Activated CD4-positive, alpha-beta T cell treated with anti-CD3 and anti-CD28 coated beads, Interleukin-2, amount 10 ng/mL, durations not matched to agents 24 days and 14 days (primary cell): ENCODE measurements at regions of chr9 and their contacts with region 1.

Region 1: GRCh38 chr9:121121582-121122087 is 46.9 kb downstream of the CNTRL start:
- DNase-seq: peak; percentile 99
- H3K4me3 Mint-ChIP-seq: peak overlapping the region; percentile 87
- H3K27ac Mint-ChIP-seq: peak overlapping the region; percentile 89
- H3K4me1 Mint-ChIP-seq: peaks cover 40% of the 10 kb centered on the region
- H3K27me3 Mint-ChIP-seq: no peaks in the 10 kb centered on the region

Region 2: GRCh38 chr9:120579750-120580590 is 541.7 kb before region 1 on chr9 and contains the start of gene CDK5RAP2:
- intact Hi-C with region 1: loop called (anchors 2 kb)
- DNase-seq: peak; percentile 98
- H3K4me3 Mint-ChIP-seq: peak within 1 kb of the TSS; percentile 98
- H3K27ac Mint-ChIP-seq: peak within 1 kb of the TSS; percentile 94
- H3K4me1 Mint-ChIP-seq: peaks cover 36% of the 10 kb centered on the region
- H3K27me3 Mint-ChIP-seq: no peaks in the 10 kb centered on the region
- total RNA-seq, gene CDK5RAP2: 69.3 and 70.0 TPM in 2 replicates

Region 3: GRCh38 chr9:121074635-121075385 is 46.8 kb before region 1 on chr9 and contains the start of gene CNTRL:
- intact Hi-C with region 1: loop called (anchors 1 kb)
- DNase-seq: peak; percentile 97
- H3K4me3 Mint-ChIP-seq: peak within 1 kb of the TSS; percentile 100
- H3K27ac Mint-ChIP-seq: peak within 1 kb of the TSS; percentile 98
- H3K4me1 Mint-ChIP-seq: peaks cover 52% of the 10 kb centered on the region
- H3K27me3 Mint-ChIP-seq: no peaks in the 10 kb centered on the region
- total RNA-seq, gene CNTRL: 68.3 and 69.4 TPM in 2 replicates

Region 4: GRCh38 chr9:121156263-121156731 is 34.7 kb after region 1 on chr9:
- intact Hi-C with region 1: loop called (anchors 1 kb)
- DNase-seq: peak; percentile 69
- H3K4me3 Mint-ChIP-seq: peak overlapping the region; percentile 16
- H3K27ac Mint-ChIP-seq: peak overlapping the region; percentile 88
- H3K4me1 Mint-ChIP-seq: peaks cover 33% of the 10 kb centered on the region
- H3K27me3 Mint-ChIP-seq: no peaks in the 10 kb centered on the region

Region 5: DNA sequence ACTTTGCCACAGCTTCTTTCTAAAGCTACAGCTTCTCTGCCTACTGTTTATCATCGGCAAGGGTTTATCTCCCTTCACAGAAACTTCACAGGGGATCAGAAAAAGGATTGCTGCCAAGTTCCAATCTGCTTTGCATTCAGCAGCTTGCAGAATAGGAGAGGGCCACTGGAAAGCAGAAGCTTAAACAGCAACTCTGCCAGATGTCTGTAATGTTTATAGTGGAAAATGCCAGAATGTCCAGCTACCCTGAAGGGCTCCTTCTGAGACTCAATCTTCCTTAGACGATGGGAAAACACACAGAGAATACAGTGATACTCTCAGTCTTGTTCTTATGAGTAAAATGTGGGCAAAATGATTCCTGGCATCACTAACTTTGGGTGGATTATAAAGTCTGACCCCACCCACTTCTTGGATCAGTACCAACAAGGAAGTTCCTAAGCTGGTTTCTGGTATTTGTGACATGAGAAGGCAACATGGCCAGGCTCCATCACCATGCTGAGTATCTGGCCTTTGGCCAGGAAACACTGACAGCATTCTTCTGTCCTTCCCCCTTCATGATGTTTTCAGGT is 229.4 kb after region 1 on chr9:
- intact Hi-C with region 1: no loop called
- DNase-seq: no peak
- H3K4me3 Mint-ChIP-seq: no peak overlapping the region
- H3K27ac Mint-ChIP-seq: no peak overlapping the region
- H3K4me1 Mint-ChIP-seq: peaks cover 37% of the 10 kb centered on the region
- H3K27me3 Mint-ChIP-seq: no peaks in the 10 kb centered on the region